ENCODE measurements at regions of chr14 and their contacts with region 1.

Region 1: DNA sequence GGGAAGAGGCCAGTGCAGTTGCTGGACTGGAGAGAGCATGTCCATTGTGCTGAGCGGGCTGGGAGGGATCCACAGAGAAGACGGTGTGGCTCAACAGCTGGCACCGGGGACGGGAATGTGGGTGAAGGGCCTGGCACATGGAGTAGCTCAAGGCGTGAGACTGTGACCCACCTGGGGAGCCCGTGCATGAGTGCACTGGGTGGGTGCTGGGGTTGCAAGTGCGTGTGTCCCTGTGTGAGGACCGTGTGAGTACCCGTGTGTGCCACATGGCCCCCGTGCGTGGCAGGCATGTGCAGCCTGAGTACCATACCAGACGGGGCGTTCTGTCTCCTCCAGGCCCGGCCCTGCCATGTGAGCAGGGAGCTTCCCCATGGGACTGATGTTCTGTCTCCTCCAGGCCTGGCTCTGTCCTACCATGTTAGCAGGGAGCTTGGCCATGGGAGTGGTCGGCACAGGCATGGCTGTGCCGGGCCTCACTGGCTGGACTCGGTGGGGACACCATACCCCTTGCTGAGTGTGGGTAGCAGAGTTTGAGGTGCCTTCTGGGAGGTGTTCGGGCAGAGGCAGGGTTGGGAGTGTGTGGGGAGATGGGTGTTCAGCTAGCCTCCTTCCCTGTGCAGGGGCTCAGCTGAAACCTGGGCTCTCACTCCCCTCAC is 234.4 kb downstream of the TMEM121 start:
- DNase-seq: no peak
- H3K4me3 Mint-ChIP-seq: no peak overlapping the region
- H3K27ac Mint-ChIP-seq: no peak overlapping the region
- H3K4me1 Mint-ChIP-seq: no peaks in the 10 kb centered on the region
- H3K27me3 Mint-ChIP-seq: peaks cover 1% of the 10 kb centered on the region

Region 2: GRCh38 chr14:105617201-105617777 is 143.5 kb before region 1 on chr14:
- intact Hi-C with region 1: loop called (anchors 2 kb)
- DNase-seq: no peak
- H3K4me3 Mint-ChIP-seq: no peak overlapping the region
- H3K27ac Mint-ChIP-seq: no peak overlapping the region
- H3K4me1 Mint-ChIP-seq: no peaks in the 10 kb centered on the region
- H3K27me3 Mint-ChIP-seq: peaks cover 3% of the 10 kb centered on the region

Region 3: DNA sequence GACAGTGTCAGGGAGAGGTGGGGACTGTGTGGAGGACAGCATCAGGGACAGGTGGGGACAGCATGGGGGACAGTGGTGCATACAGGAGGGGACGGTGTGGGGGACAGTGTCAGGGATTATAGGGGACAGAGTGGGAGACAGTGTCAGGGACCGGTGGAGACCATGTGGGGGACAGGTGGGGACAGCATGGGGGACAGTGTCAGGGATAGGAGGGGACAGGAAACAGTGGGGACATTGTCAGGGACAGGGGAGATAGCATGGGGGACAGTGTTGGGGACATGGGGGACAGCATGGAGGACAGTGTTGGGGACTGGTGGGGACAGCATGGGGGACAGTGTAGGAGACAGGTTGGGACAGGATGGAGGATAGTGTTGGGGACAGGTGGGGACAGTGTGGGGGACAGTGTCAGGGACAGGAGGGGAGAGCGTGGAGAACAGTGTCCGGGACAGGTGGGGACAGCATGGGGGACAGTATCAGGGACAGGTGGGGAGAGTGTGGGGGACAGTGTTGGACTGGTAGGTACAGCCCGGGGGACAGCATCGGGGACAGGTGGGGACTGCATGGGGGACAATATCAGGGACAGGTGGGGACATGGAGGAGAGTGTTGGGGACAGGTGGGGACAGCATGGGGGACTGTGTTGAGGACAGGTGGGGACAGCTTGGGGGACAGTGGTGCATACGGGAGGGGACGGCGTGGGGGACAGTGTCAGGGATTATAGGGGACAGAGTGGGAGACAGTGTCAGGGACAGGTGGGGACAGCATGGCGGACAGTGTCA is 22.4 kb before region 1 on chr14:
- intact Hi-C with region 1: no loop called
- DNase-seq: no peak
- H3K4me3 Mint-ChIP-seq: no peak overlapping the region
- H3K27ac Mint-ChIP-seq: peak overlapping the region; percentile 43
- H3K4me1 Mint-ChIP-seq: no peaks in the 10 kb centered on the region
- H3K27me3 Mint-ChIP-seq: no peaks in the 10 kb centered on the region

Region 4: DNA sequence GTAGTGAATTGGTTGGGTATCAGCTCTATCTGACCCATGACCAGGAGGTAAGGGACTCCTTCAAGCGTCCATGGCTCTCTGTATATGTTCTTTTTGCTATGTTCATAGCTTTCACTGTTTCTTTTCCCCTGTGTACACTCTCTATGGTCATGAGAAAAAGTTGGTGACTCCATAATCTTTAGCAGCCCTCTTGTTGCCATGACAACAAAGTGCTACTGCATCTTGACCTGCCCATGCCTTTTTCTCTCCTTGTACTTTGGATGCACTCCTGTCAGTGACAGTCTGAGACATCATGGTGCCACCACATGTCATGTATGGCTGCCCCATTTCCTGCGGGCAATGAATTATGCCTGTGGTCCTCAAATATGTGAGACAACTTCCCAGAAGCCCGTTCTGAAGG is 45.7 kb after region 1 on chr14:
- intact Hi-C with region 1: no loop called
- DNase-seq: peak; percentile 21
- H3K4me3 Mint-ChIP-seq: no peak overlapping the region
- H3K27ac Mint-ChIP-seq: no peak overlapping the region
- H3K4me1 Mint-ChIP-seq: no peaks in the 10 kb centered on the region
- H3K27me3 Mint-ChIP-seq: peaks cover 18% of the 10 kb centered on the region

Region 5: DNA sequence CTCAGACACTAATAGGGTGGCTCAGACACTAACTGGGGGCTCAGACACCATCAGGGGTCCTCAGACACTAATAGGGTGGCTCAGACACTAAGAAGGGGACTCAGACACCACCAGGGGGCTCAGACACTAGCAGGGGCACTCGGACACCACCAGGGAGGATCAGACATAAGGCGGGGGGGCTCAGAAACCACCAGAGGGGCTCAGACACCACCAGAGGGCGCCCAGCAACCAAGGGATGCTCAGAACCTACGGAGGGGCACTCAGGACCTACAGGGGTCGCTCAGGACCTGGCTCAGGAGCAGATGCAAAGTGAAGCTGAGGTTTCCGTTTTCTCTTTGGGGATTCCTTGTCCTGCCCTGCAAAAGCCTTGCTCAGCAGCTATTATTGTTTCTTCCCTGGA is 214.1 kb after region 1 on chr14:
- intact Hi-C with region 1: no loop called
- DNase-seq: peak; percentile 85
- H3K4me3 Mint-ChIP-seq: no peak overlapping the region
- H3K27ac Mint-ChIP-seq: no peak overlapping the region
- H3K4me1 Mint-ChIP-seq: peaks cover 3% of the 10 kb centered on the region
- H3K27me3 Mint-ChIP-seq: peaks cover 10% of the 10 kb centered on the region

Measured in activated CD4-positive, alpha-beta T cell treated with anti-CD3 and anti-CD28 coated beads, Interleukin-2, amount 10 ng/mL, durations not matched to agents 24 days and 14 days (primary cell).